Gastrocnemius medialis (tissue), 4 donors: ENCODE measurements at regions of chr10 and their contacts with region 1.

Region 1: DNA sequence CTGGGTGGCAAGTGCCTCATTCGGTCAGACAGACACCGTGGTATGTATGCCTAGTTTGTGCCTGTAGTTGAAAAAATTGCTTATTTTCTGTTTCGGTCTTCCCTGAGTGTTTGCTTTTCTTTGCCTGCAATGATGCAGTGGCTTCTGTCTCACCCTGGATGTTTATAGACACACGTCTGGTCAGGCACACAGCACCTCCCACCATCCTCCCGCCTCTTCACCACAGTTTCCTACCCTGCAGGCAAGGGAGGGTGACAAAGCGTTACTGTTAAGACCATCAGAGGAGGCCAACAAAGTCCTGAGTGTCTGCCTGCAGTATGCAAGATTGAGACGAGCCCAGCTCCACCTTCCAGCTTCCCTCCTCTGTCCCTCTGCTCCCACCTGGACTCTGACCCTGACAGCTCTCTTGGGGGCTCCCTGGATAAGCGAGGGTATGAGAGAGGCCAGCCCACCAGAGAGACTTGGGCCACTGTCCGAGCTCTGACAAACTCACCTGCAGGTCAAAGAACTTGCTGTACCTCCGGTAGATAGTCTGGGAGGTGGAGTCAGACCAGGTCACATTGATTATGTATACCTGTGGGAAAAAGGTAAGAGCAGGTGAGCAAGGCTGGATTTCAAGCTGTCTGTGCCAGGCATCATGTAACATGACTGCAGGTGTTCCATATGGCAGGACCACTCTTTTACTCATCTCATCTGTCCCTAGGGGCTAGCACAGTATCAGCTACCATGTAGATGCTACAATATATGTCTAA is 54.4 kb downstream of the SH3PXD2A start:
- DNase-seq: no peak
- ATAC-seq: no peak
- H3K4me3 ChIP-seq: no peak overlapping the region
- H3K27ac ChIP-seq: no peak overlapping the region
- H3K4me1 ChIP-seq: peaks cover 8 to 14% of the 10 kb centered on the region in 2 donors
- H3K27me3 ChIP-seq: no peaks in the 10 kb centered on the region
- CTCF ChIP-seq: no peak
- POLR2A ChIP-seq: no peak

Region 2: DNA sequence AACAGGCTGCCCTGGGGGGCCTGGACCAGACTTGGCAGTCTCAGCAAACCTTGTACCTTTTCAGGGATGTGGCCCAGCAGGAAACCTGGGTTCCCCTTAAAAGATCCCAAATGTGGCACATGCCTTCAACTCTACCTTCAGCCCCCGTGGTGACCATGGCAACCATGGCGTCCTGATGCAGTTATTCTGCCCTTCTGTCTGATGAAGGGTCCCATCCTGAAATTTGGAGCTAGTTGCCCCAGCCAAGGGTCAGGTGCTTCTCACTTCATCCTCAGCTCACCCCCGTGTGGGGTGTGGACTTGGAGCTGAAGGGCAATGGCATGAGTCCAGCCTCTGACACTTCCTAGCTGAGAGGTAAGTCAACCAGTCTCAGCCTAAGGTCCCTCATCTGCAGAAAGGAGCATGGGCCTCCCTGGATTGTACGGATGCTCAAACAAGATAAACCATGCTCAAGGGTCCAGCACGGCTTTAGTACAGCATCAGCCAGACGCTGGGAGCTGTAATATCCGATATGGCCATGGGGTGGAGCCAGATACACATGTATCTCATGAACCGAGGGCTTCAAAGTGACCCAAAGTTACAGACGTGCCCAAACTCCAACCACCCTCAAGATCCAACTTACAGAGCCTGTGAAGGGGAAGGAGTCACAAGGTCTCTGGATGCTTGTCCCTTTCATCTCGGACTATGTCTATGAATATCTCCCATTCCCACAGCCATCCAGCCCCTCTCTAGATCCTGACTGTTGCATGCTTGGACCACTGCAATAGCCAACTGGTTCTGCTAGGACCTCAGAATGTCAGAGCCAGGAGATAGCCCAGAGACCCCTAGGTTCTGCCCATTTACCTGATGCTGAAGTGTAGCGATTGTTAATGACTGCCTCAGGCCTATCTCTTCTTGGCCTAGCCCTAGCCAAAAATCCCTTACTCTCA is 88.1 kb before region 1 on chr10:
- in situ Hi-C with region 1: no loop called
- intact Hi-C with region 1: loop called (anchors 5 kb)
- DNase-seq: peak; percentile 63 to 79
- ATAC-seq: peak; percentile 81 to 94
- H3K4me3 ChIP-seq: no peak overlapping the region
- H3K27ac ChIP-seq: no peak overlapping the region
- H3K4me1 ChIP-seq: no peaks in the 10 kb centered on the region
- H3K27me3 ChIP-seq: no peaks in the 10 kb centered on the region
- CTCF ChIP-seq: peak; percentile 88 to 97 (median 93)
- POLR2A ChIP-seq: no peak